SK-N-SH (cell line): ENCODE measurements at regions of chr6 and their contacts with region 1.

Region 1: GRCh38 chr6:43454696-43455530 is 435 bp downstream of the DLK2 start:
- DNase-seq: peak; percentile 94
- H3K4me3 ChIP-seq: peak overlapping the region; percentile 49 to 60
- H3K27ac ChIP-seq: no peak overlapping the region; a peak in 1 of 4 replicates
- H3K4me1 ChIP-seq: peaks cover 0 to 8% of the 10 kb centered on the region in 2 experiments; a peak in 1 of 4 replicates
- H3K27me3 ChIP-seq: peaks cover 7% of the 10 kb centered on the region; the same call in 1 of the 2 replicates
- CTCF ChIP-seq: peak; percentile 15; the same call in 1 of the 2 replicates
- EP300 ChIP-seq: no peak
- RAD21 ChIP-seq: no peak

Region 2: DNA sequence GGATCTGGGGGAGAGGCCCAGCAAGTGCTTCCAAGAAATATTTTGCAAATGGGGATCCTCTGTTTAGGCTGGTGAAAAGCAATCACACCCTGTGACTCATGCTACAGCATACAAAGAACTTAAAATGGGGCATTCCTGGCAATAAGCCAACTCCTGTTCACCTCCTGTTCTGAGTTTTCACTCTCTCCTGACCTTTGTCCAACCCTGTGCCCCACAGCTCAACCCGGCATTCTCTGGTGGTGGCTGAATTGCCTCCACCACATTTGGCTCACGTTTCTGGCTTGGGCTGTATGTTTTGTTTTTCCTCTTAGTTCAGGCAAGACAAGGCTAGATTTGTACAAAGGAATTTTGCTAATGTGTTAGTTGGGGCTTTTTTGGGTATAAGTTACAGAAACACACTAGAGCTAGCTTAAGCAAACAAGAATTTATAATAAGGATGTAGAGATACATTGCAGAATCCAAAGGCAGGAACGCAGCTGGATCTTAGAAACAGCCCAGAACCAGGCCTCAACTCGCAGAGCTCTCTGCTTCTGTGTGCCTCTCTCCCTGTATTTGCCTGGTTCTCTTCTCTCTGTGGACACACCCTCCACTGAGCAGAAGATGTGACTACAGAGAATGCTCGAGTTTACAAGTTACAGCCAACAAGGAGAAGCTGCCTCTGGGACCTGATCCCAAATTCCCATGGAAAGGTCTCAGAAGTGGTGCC is 18.2 kb before region 1 on chr6:
- CTCF ChIA-PET with region 1: interaction called, 10 read pairs
- POLR2A ChIA-PET with region 1: interaction called, 3 read pairs
- DNase-seq: no peak
- H3K4me3 ChIP-seq: no peak overlapping the region
- H3K27ac ChIP-seq: no peak overlapping the region; a peak in 2 of 4 replicates
- H3K4me1 ChIP-seq: peaks cover 0 to 14% of the 10 kb centered on the region in 2 experiments; a peak in 1 of 4 replicates
- H3K27me3 ChIP-seq: no peaks in the 10 kb centered on the region
- CTCF ChIP-seq: no peak
- EP300 ChIP-seq: no peak
- RAD21 ChIP-seq: no peak

Region 3: GRCh38 chr6:43444036-43444435 is 10.9 kb before region 1 on chr6:
- CTCF ChIA-PET with region 1: interaction called, 12 read pairs
- POLR2A ChIA-PET with region 1: interaction called, 3 read pairs
- DNase-seq: no peak
- H3K4me3 ChIP-seq: no peak overlapping the region
- H3K27ac ChIP-seq: no peak overlapping the region; a peak in 1 of 4 replicates
- H3K4me1 ChIP-seq: no peaks in the 10 kb centered on the region
- H3K27me3 ChIP-seq: no peaks in the 10 kb centered on the region
- CTCF ChIP-seq: no peak
- EP300 ChIP-seq: no peak
- RAD21 ChIP-seq: no peak

Region 4: GRCh38 chr6:44237021-44237812 is 782.3 kb after region 1 on chr6:
- CTCF ChIA-PET with region 1: no interaction called
- POLR2A ChIA-PET with region 1: no interaction called
- DNase-seq: peak; percentile 86
- H3K4me3 ChIP-seq: peak overlapping the region; percentile 53 to 62
- H3K27ac ChIP-seq: peak overlapping the region; percentile 84 to 90
- H3K4me1 ChIP-seq: peaks cover 26 to 52% of the 10 kb centered on the region in 2 experiments
- H3K27me3 ChIP-seq: no peaks in the 10 kb centered on the region
- CTCF ChIP-seq: no peak
- EP300 ChIP-seq: peak in 1 of 2 experiments; percentile 60; a peak in 1 of 4 replicates
- RAD21 ChIP-seq: no peak